Heart right ventricle (tissue), 16 donors: ENCODE measurements at regions of chr4 and their contacts with region 1.

Region 1: GRCh38 chr4:69322055-69322454 is 41.8 kb downstream of the UGT2B28 start:
- DNase-seq: no peak
- ATAC-seq: no peak
- H3K4me3 ChIP-seq: no peak overlapping the region
- H3K27ac ChIP-seq: no peak overlapping the region
- H3K4me1 ChIP-seq: no peaks in the 10 kb centered on the region
- H3K27me3 ChIP-seq: no peaks in the 10 kb centered on the region
- CTCF ChIP-seq: no peak

Region 2: GRCh38 chr4:68433582-68433981 is 888.5 kb before region 1 on chr4:
- intact Hi-C with region 1: no loop called
- DNase-seq: no peak
- ATAC-seq: no peak
- H3K4me3 ChIP-seq: no peak overlapping the region
- H3K27ac ChIP-seq: no peak overlapping the region
- H3K4me1 ChIP-seq: no peaks in the 10 kb centered on the region
- H3K27me3 ChIP-seq: no peaks in the 10 kb centered on the region
- CTCF ChIP-seq: no peak

Region 3: DNA sequence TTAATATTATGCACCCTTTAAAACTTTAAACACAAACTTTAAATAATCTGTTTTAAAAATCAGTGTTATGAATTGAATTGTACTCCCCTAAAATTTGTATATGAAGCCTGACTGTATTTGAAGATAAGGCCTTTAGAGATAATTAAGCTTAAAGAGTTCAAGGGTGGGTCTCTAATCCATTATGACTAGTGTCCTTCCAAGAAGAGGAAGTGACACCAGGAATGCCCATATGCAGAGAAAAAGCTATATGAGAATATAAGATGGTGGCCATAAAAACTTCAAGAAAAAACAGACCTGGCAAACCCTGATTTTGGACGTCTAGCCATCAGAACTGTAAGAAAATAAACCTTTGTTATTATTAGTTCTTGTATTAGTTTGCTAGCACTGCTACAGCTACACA is 288.4 kb after region 1 on chr4:
- intact Hi-C with region 1: loop called in 8 of 10 experiments (anchors 5 to 10 kb)
- DNase-seq: no peak
- ATAC-seq: no peak
- H3K4me3 ChIP-seq: no peak overlapping the region
- H3K27ac ChIP-seq: no peak overlapping the region
- H3K4me1 ChIP-seq: no peaks in the 10 kb centered on the region
- H3K27me3 ChIP-seq: no peaks in the 10 kb centered on the region
- CTCF ChIP-seq: no peak

Region 4: GRCh38 chr4:69617083-69617694 is 295.1 kb after region 1 on chr4:
- intact Hi-C with region 1: loop called in 8 of 10 experiments (anchors 5 to 10 kb)
- DNase-seq: no peak
- ATAC-seq: no peak
- H3K4me3 ChIP-seq: no peak overlapping the region
- H3K27ac ChIP-seq: no peak overlapping the region
- H3K4me1 ChIP-seq: no peaks in the 10 kb centered on the region
- H3K27me3 ChIP-seq: no peaks in the 10 kb centered on the region
- CTCF ChIP-seq: peak in 7 of 9 donors; percentile 26 to 59 (median 29)

Region 5: GRCh38 chr4:69743476-69744156 is 421.6 kb after region 1 on chr4:
- intact Hi-C with region 1: no loop called
- DNase-seq: no peak
- ATAC-seq: no peak
- H3K4me3 ChIP-seq: no peak overlapping the region
- H3K27ac ChIP-seq: no peak overlapping the region
- H3K4me1 ChIP-seq: no peaks in the 10 kb centered on the region
- H3K27me3 ChIP-seq: no peaks in the 10 kb centered on the region
- CTCF ChIP-seq: no peak